ENCODE measurements at regions of chrX and their contacts with region 1.

Region 1: DNA sequence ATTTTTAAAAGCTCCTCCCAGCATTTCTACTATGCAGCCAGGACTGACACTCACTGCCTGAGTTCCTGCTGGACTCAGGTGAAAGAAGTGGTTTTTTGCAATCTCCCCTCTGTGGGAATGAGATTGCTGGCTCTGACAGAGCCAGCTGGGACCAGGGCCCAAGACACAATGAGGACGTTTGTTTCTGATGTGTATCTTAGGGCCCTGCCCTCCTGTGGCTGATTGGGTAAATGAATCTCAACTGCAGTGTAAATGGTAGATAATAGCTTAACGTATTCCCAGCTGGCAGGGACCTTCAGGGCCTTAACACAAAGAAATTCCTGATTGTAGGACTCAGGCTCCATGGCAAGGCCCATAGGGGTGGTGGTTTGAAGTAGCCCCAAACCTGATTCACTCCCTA is 85.8 kb upstream of the PRPS1 start:
- DNase-seq: peak in 4 of 10 donors; percentile 19 to 50 (median 41)
- H3K4me3 ChIP-seq: no peak overlapping the region
- H3K27ac ChIP-seq: peak overlapping the region in 2 of 59 donors; percentile 7 to 53
- H3K27me3 ChIP-seq: peaks cover 0 to 89% (median 14%) of the 10 kb centered on the region in 45 donors
- CTCF ChIP-seq: peak in 33 of 56 donors; percentile 11 to 52 (median 27)

Region 2: DNA sequence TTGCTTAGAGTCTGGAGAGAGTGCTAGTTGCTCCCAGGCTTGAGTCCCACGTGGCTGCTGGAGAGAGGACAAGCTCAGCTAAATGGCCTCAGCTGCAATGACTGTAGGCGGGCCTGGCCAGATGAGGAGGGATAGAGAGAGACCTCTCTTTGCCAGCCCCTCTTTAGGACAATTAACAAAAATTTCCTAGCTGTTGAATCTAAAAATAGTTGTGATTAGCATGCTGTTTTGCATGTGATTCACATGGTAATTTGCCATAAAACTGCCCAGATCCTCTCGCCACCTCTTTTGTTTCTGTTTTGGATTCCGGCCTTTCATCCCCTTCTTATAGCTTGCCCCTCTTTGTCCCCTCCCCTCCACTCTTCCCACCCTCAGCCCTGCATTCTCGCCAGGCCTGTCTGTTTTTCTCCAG is 57.0 kb after region 1 on chrX:
- intact Hi-C with region 1: loop called in 1 of 2 experiments (anchors 2 kb)
- DNase-seq: no peak
- H3K4me3 ChIP-seq: no peak overlapping the region
- H3K27ac ChIP-seq: no peak overlapping the region
- H3K27me3 ChIP-seq: peaks cover 0 to 89% (median 18%) of the 10 kb centered on the region in 45 donors
- CTCF ChIP-seq: no peak

Region 3: GRCh38 chrX:107627838-107628661 is 85.5 kb after region 1 on chrX and contains the start of gene PRPS1:
- intact Hi-C with region 1: no loop called
- DNase-seq: peak; percentile 66 to 90 (median 88)
- H3K4me3 ChIP-seq: peak within 1 kb of the TSS; percentile 38 to 77 (median 65)
- H3K27ac ChIP-seq: peak within 1 kb of the TSS in 44 of 59 donors; percentile 2 to 74 (median 46)
- H3K27me3 ChIP-seq: peaks cover 0 to 40% (median 10%) of the 10 kb centered on the region in 45 donors
- CTCF ChIP-seq: peak in 13 of 56 donors; percentile 8 to 32 (median 17)
- total RNA-seq, gene PRPS1: 23.4 to 69.9 (median 44.7) TPM

Region 4: DNA sequence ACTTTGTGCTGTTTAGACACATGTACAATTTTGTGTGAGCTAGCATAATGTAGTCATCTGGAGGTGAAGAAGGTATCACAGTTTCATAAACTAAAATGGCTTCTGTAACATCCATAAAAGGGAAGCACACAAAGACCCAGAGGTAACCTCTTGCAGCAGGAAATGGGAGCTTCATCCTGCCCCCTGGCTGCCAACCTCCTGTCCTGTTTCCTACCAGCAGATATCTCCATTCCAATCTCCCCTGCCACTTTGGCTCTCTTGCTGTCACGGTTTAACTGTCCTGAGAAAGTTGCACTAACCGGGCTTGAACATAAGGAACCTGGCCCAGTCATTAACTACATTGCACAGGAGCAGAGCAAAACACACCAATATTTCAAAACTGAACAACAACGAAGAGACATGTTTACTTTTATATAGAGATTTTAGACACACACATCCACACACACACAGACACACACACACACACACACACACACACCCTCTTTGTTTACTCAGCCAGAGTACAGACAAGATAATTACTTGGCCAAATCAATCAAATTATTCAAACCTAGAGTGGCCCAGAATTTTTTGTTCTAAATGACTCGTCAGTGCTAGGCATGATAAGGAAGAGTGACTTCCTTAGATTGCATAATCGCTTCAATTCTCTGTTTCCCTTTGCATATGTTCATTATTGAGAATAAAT is 307.4 kb after region 1 on chrX:
- intact Hi-C with region 1: no loop called
- DNase-seq: no peak
- H3K4me3 ChIP-seq: no peak overlapping the region
- H3K27ac ChIP-seq: no peak overlapping the region
- H3K27me3 ChIP-seq: peaks cover 0 to 66% (median 17%) of the 10 kb centered on the region in 45 donors
- CTCF ChIP-seq: peak in 14 of 56 donors; percentile 9 to 33 (median 20)

Region 5: GRCh38 chrX:107905366-107905765 is 362.9 kb after region 1 on chrX:
- intact Hi-C with region 1: no loop called
- DNase-seq: no peak
- H3K4me3 ChIP-seq: no peak overlapping the region
- H3K27ac ChIP-seq: no peak overlapping the region
- H3K27me3 ChIP-seq: peaks cover 0 to 55% (median 5%) of the 10 kb centered on the region in 45 donors
- CTCF ChIP-seq: no peak

Region 6: GRCh38 chrX:108044554-108045256 is 502.2 kb after region 1 on chrX and contains the start of gene VSIG1:
- intact Hi-C with region 1: no loop called
- DNase-seq: no peak
- H3K4me3 ChIP-seq: no peak within 1 kb of the TSS
- H3K27ac ChIP-seq: no peak within 1 kb of the TSS
- H3K27me3 ChIP-seq: peaks cover 0 to 76% (median 15%) of the 10 kb centered on the region in 45 donors
- CTCF ChIP-seq: no peak
- total RNA-seq, gene VSIG1: 0.16 to 5.1 (median 1.1) TPM in 113 of 120 experiments, not detected in the others